ENCODE measurements at regions of chr1 and their contacts with region 1.

Region 1: GRCh38 chr1:53739109-53739681 is at the start of gene GLIS1:
- DNase-seq: no peak
- ATAC-seq: peak; percentile 98
- H3K4me3 ChIP-seq: peak within 1 kb of the TSS; percentile 49 to 62
- H3K27ac ChIP-seq: no peak within 1 kb of the TSS
- H3K4me1 ChIP-seq: peaks cover 4% of the 10 kb centered on the region; the same call in 1 of the 2 replicates
- H3K27me3 ChIP-seq: peaks cover 14% of the 10 kb centered on the region
- CTCF ChIP-seq: no peak
- total RNA-seq, gene GLIS1: 0.28 TPM

Region 2: GRCh38 chr1:53837646-53837923 is 98.4 kb after region 1 on chr1:
- CTCF ChIA-PET with region 1: no interaction called
- POLR2A ChIA-PET with region 1: interaction called, 10 read pairs
- in situ Hi-C with region 1: no loop called
- intact Hi-C with region 1: no loop called
- DNase-seq: no peak
- ATAC-seq: no peak
- H3K4me3 ChIP-seq: peak overlapping the region; percentile 89 to 99
- H3K27ac ChIP-seq: peak overlapping the region; percentile 93
- H3K4me1 ChIP-seq: peaks cover 16% of the 10 kb centered on the region; the same call in 1 of the 2 replicates
- H3K27me3 ChIP-seq: no peaks in the 10 kb centered on the region
- CTCF ChIP-seq: no peak